ENCODE measurements at regions of chr1 and their contacts with region 1.

Region 1: DNA sequence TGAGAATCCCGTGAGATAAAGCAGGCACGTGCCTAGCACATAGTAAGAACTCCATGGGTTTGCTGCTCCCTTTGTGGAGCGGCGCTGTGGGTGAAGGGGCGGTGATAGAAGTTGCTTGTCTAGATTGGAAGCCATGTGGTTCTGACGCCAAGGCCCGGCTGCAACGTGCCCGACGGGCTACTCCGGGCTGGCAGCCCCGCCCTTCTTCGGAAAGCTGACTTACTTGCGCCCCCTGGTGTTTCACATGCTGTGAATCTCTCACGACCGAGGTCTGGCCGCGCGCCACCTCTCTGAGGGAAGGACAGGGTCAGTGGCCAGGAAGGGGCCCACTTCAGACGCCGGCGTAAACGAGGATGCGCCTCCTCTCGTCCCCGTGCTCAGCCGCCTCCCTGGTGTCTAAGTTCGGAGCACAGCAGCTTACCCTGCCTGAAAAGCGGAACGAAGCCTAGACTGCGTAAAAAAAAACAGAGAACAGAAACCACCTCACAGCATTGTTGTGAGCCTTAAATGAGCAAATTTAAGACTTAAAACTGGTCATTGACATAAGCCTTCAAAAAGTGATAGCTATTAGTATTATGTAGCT is 42.6 kb upstream of the WNT2B start:
- DNase-seq: peak; percentile 85 to 89
- H3K4me3 ChIP-seq: peak overlapping the region; percentile 54
- H3K27ac ChIP-seq: no peak overlapping the region
- H3K4me1 ChIP-seq: peaks cover 40% of the 10 kb centered on the region
- H3K27me3 ChIP-seq: no peaks in the 10 kb centered on the region
- CTCF ChIP-seq: peak; percentile 98

Region 2: GRCh38 chr1:112619520-112620376 is 153.6 kb after region 1 on chr1 and contains the start of gene CAPZA1:
- CTCF ChIA-PET with region 1: no interaction called
- POLR2A ChIA-PET with region 1: no interaction called
- intact Hi-C with region 1: loop called (anchors 10 kb)
- DNase-seq: peak; percentile 81 to 83
- H3K4me3 ChIP-seq: peak within 1 kb of the TSS; percentile 96
- H3K27ac ChIP-seq: peak within 1 kb of the TSS; percentile 86
- H3K4me1 ChIP-seq: peaks cover 37% of the 10 kb centered on the region
- H3K27me3 ChIP-seq: no peaks in the 10 kb centered on the region
- CTCF ChIP-seq: no peak
- total RNA-seq, gene CAPZA1: 101 and 145 TPM in 2 replicates

Region 3: DNA sequence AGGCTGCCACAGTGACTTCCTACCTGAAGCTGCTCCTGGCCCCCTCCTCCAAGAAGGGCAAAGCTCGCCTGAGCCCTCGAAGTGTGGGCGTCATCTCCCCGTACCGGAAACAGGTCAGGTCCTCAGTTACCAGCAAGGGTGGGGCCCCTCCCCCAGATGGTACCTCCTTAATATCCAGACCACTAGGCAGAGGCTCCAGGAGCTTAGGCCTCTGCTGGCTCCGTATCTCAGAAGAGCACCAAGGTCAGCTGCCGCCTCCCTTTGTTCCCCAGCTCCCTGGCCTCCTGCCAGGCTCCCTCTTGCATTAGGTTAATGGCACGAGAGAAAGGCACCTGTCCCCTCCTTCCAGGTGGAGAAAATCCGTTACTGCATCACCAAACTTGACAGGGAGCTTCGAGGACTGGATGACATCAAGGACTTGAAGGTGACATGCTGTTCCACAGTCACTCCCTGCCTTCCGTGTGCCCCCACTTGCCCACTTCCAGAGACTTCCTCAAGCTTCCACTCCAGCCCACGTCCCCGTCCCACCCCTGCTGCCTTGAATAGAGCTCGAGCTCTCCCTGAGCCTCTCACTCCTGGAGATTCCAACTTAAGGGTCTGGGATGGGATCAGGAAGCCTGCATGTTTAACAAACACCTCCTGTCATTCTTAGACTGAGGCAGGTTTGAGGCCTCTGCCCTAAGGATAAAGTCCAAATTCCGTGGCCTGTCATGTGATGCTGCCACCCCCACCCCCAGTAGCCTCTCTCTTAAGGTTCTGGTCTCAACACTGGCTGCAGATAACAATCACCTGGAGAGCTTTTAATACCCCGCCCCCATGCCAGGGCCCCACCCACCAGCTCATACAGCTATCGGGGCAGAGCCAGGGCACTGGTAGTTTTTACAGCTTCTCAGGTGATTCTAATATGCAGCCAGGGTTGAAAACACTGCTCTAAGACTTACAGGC is 232.5 kb after region 1 on chr1:
- CTCF ChIA-PET with region 1: no interaction called
- POLR2A ChIA-PET with region 1: interaction called, 14 read pairs
- intact Hi-C with region 1: loop called (anchors 10 kb)
- DNase-seq: peak; percentile 60 to 79
- H3K4me3 ChIP-seq: no peak overlapping the region
- H3K27ac ChIP-seq: peak overlapping the region; percentile 14; the same call in 1 of the 2 replicates
- H3K4me1 ChIP-seq: peaks cover 55% of the 10 kb centered on the region
- H3K27me3 ChIP-seq: no peaks in the 10 kb centered on the region
- CTCF ChIP-seq: no peak

Measured in PC-9 (cell line).